Calu3 (cell line): ENCODE measurements at regions of chr6 and their contacts with region 1.

Region 1: DNA sequence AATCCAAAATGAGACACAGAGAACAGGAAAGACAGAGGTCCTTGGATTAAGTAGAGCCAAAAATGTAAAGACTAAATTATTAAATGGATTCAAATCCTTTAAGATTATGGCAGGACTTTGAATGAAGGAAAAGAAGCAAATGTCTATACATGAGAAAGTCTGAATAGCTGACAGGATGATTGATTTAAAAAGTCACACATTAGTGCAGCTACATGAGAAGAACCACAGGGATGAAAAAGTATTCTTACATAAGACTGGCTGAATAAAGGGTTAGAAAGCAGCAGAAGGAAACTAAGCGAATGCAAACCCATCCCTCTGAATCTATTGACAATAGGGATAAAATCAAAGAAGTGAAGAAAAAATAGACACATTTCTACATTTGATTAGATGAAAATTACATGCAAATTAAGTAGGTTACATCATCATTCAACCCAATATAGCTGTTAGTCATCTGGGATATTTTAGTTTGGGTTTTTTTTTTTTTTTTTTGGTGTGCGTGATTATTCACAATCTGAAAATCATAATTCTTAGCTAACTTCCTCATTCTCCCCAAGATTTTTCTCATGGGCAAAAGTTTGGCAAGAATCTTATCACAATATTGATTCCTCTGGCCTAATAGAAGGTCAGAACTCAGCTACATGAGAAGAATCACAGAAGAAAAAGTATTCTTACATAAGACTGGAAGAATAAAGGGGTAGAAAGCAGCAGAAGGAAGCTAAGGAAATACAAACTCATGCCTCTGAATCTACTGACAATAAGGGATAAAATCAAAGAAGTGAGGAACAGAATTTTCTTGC is 845.4 kb downstream of the HACE1 start:
- DNase-seq: no peak
- H3K4me3 Mint-ChIP-seq: peak overlapping the region; percentile 31
- H3K27ac Mint-ChIP-seq: peak overlapping the region; percentile 73
- H3K4me1 Mint-ChIP-seq: peaks cover 41% of the 10 kb centered on the region
- H3K27me3 Mint-ChIP-seq: no peaks in the 10 kb centered on the region
- CTCF ChIP-seq: no peak

Region 2: GRCh38 chr6:104212977-104213668 is 198.8 kb after region 1 on chr6:
- CTCF ChIA-PET with region 1: no interaction called
- intact Hi-C with region 1: no loop called
- DNase-seq: no peak
- H3K4me3 Mint-ChIP-seq: no peak overlapping the region
- H3K27ac Mint-ChIP-seq: no peak overlapping the region
- H3K4me1 Mint-ChIP-seq: no peaks in the 10 kb centered on the region
- H3K27me3 Mint-ChIP-seq: no peaks in the 10 kb centered on the region
- CTCF ChIP-seq: no peak

Region 3: GRCh38 chr6:104525677-104526312 is 511.4 kb after region 1 on chr6:
- CTCF ChIA-PET with region 1: no interaction called
- intact Hi-C with region 1: loop called (anchors 5 kb)
- DNase-seq: peak; percentile 76
- H3K4me3 Mint-ChIP-seq: peak overlapping the region; percentile 66
- H3K27ac Mint-ChIP-seq: peak overlapping the region; percentile 24
- H3K4me1 Mint-ChIP-seq: peaks cover 26% of the 10 kb centered on the region
- H3K27me3 Mint-ChIP-seq: no peaks in the 10 kb centered on the region
- CTCF ChIP-seq: peak; percentile 73

Region 4: DNA sequence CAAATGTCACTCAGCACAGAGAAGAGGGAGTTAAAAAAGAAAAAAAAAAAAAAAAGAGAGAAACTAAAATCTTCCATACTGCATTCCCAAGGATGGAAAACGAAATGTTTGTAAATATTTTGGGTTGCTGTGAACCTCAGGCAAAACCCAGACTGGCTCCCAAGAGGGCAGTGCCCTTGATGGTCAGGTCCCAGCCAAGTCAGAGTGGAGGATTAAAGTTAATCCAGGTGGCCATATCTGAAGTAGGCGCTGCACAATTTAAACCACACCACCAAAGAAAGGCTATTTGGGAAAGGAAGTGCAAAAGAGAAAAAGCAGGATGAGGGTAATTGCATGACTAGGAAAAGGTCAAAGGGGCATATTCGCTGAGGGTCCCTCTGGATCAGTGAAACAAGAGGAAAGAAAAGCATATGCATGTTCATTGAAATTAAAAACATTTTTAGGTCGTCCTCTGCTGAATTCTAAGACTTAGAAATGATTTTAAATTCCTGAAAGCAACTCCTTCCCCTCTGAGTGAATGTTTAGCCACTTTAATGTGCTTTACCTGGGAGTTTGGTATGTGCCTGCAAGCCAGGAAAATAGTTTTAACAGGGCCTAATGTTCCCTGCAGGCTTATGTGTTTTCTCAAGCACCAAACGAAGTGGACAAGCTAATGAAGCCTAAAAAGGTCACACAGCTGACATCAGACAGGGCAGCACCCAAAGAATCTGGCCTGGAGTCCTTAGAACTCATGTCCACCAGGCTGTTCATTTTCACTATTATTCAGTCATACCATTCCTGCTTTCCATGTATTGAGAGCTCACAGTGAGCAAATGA is 686.2 kb after region 1 on chr6:
- CTCF ChIA-PET with region 1: no interaction called
- intact Hi-C with region 1: no loop called
- DNase-seq: no peak
- H3K4me3 Mint-ChIP-seq: no peak overlapping the region
- H3K27ac Mint-ChIP-seq: no peak overlapping the region
- H3K4me1 Mint-ChIP-seq: no peaks in the 10 kb centered on the region
- H3K27me3 Mint-ChIP-seq: no peaks in the 10 kb centered on the region
- CTCF ChIP-seq: no peak